ENCODE measurements at regions of chr15 and their contacts with region 1.

Region 1: GRCh38 chr15:84600851-84601838 is at the start of gene ZSCAN2:
- DNase-seq: peak; percentile 97
- H3K27ac ChIP-seq: peak within 1 kb of the TSS; percentile 67
- CTCF ChIP-seq: no peak

Region 2: GRCh38 chr15:84633311-84634227 is 32.4 kb after region 1 on chr15:
- CTCF ChIA-PET with region 1: interaction called, 4 read pairs
- POLR2A ChIA-PET with region 1: interaction called, 15 read pairs
- DNase-seq: peak; percentile 55
- H3K27ac ChIP-seq: peak overlapping the region; percentile 80
- CTCF ChIP-seq: no peak

Measured in RWPE1 (cell line).